Panc1 (cell line): ENCODE measurements at regions of chr18 and their contacts with region 1.

Region 1: DNA sequence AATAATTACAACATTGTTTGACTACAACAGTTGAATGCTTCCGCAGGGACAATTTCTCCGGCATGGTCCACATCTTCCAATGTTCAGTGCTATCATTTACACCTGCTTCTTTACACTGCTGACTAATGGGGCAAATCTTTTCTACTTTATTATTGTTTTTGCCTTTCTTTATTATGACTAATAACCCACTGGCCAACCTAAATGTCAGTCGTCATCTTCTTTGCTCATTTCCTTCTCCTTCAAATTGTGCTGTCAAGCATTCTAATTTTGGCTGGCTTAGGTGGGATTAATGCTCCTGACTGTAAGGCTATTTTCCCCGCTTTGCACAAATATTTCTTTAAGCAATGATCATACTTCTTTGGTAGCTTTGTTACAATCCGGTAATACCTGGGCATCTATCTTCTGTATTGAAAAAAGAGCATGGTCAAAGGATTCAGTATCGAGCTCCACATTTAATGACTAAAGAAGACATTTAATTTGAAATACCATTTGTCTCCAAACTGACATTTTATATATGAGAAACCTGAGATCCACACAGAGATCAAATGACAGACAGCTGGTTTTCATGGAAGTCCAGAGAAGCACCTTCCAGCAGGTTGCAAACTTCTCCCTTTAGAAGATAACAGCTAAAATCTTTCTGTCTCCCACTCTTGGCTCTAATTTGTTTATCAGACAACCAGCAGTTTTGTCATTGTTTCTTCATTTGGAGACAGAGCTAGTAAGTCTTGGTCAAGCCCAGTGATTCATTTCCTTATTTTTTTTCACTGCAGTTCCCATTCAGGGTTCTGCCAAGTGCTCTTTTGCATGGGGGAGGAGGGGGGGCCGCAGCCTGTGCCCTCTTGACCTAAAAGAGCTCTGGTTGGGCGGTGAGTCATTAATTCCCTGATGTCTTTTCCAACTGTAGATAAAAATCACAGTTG is 132.9 kb downstream of the SOCS6 start:
- DNase-seq: peak; percentile 85
- ATAC-seq: peak; percentile 76
- H3K4me3 ChIP-seq: 0 out of 4 replicates have a peak overlapping the region, but pooled peaks of 1 of the 2 experiments have one; percentile 9
- H3K27ac ChIP-seq: peak overlapping the region; percentile 100
- H3K4me1 ChIP-seq: peaks cover 64% of the 10 kb centered on the region
- H3K27me3 ChIP-seq: no peaks in the 10 kb centered on the region
- CTCF ChIP-seq: no peak

Region 2: DNA sequence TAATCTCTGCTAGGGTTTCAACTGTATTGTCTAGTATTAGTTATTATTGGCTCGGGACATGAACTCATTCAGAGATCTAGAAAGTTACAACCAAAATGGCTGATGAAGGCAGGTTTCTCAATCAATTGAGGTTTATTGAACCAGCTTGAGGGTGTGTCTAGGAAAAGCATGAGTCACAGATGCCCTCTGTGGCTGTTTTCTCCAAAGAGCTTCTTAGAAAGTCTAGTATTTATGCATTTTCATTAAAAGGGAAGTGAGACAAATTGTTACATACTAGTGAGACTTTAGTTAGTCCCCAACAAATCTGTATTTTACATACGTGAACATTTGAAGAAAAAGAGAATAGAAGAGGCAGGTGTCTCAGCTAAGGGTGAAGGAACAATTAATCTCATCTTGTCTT is 193.2 kb before region 1 on chr18:
- CTCF ChIA-PET with region 1: no interaction called
- POLR2A ChIA-PET with region 1: no interaction called
- in situ Hi-C with region 1: no loop called
- intact Hi-C with region 1: no loop called
- DNase-seq: no peak
- ATAC-seq: no peak
- H3K4me3 ChIP-seq: no peak overlapping the region
- H3K27ac ChIP-seq: no peak overlapping the region
- H3K4me1 ChIP-seq: no peaks in the 10 kb centered on the region
- H3K27me3 ChIP-seq: no peaks in the 10 kb centered on the region
- CTCF ChIP-seq: no peak

Region 3: DNA sequence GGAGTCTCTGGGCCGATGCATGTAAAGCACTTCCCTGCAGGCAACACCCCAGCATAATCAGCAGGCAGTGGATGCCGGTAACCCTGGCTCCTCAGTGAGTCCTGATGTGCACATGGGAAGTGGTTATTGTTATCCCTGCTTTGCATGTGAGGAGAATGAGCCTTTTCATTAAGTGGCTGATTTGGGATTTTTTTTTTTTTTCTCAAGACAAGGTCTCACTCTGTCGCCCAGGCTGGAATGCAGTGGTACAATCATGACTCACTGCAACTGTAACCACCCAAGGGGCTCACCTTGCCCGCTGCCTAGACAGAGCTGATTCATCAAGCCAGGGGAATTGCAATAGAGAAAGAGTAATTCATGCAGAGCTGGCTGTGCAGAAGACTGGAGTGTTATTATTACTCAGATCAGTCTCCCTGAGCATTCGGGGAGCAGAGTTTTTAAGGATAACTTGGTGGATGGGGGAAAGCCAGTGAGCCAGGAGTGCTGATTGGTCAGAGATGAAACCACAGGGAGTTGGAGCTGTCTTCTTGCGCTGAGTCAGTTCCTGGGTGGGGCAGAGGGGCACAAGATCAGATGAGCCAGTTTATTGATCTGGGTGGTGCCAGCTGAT is 37.4 kb before region 1 on chr18:
- CTCF ChIA-PET with region 1: no interaction called
- POLR2A ChIA-PET with region 1: no interaction called
- in situ Hi-C with region 1: no loop called
- intact Hi-C with region 1: loop called (anchors 5 kb)
- DNase-seq: peak; percentile 73
- ATAC-seq: peak; percentile 82
- H3K4me3 ChIP-seq: peak overlapping the region; percentile 11 to 38; a peak in 3 of 4 replicates
- H3K27ac ChIP-seq: peak overlapping the region; percentile 98
- H3K4me1 ChIP-seq: peaks cover 47% of the 10 kb centered on the region
- H3K27me3 ChIP-seq: no peaks in the 10 kb centered on the region
- CTCF ChIP-seq: no peak